Transverse colon (tissue), 4 donors: ENCODE measurements at regions of chr11 and their contacts with region 1.

Region 1: GRCh38 chr11:65425105-65425970 is 2.7 kb downstream of the NEAT1 start:
- DNase-seq: peak; percentile 69
- H3K4me3 ChIP-seq: peak overlapping the region; percentile 73 to 90 (median 78)
- H3K27ac ChIP-seq: peak overlapping the region; percentile 100
- H3K4me1 ChIP-seq: peaks cover 15 to 52% (median 45%) of the 10 kb centered on the region in 4 donors
- H3K27me3 ChIP-seq: no peaks in the 10 kb centered on the region
- CTCF ChIP-seq: peak in 4 of 5 experiments; percentile 11 to 67 (median 47)
- EP300 ChIP-seq: no peak
- POLR2A ChIP-seq: peak; percentile 83

Region 2: GRCh38 chr11:65482306-65482850 is 57.0 kb after region 1 on chr11:
- in situ Hi-C with region 1: no loop called
- intact Hi-C with region 1: loop called (anchors 1 kb)
- DNase-seq: no peak
- H3K4me3 ChIP-seq: no peak overlapping the region
- H3K27ac ChIP-seq: peak overlapping the region; percentile 96 to 100 (median 98)
- H3K4me1 ChIP-seq: peaks cover 36 to 69% (median 54%) of the 10 kb centered on the region in 4 donors
- H3K27me3 ChIP-seq: no peaks in the 10 kb centered on the region
- CTCF ChIP-seq: no peak
- EP300 ChIP-seq: no peak
- POLR2A ChIP-seq: no peak

Region 3: GRCh38 chr11:65791691-65792213 is 366.4 kb after region 1 on chr11:
- in situ Hi-C with region 1: no loop called
- intact Hi-C with region 1: no loop called
- DNase-seq: peak; percentile 87
- H3K4me3 ChIP-seq: no peak overlapping the region
- H3K27ac ChIP-seq: peak overlapping the region; percentile 80 to 93 (median 86)
- H3K4me1 ChIP-seq: peaks cover 12 to 63% (median 55%) of the 10 kb centered on the region in 4 donors
- H3K27me3 ChIP-seq: peaks cover 23% of the 10 kb centered on the region
- CTCF ChIP-seq: no peak
- EP300 ChIP-seq: no peak
- POLR2A ChIP-seq: peak; percentile 73